ENCODE measurements at regions of chr4 and their contacts with region 1.

Region 1: GRCh38 chr4:30714408-30715027 is 5.7 kb upstream of the PCDH7 start:
- DNase-seq: peak in 1 of 2 experiments; percentile 35
- H3K4me3 ChIP-seq: no peak overlapping the region
- H3K27ac ChIP-seq: no peak overlapping the region
- H3K4me1 ChIP-seq: no peaks in the 10 kb centered on the region
- H3K27me3 ChIP-seq: no peaks in the 10 kb centered on the region
- CTCF ChIP-seq: peak; percentile 79

Region 2: DNA sequence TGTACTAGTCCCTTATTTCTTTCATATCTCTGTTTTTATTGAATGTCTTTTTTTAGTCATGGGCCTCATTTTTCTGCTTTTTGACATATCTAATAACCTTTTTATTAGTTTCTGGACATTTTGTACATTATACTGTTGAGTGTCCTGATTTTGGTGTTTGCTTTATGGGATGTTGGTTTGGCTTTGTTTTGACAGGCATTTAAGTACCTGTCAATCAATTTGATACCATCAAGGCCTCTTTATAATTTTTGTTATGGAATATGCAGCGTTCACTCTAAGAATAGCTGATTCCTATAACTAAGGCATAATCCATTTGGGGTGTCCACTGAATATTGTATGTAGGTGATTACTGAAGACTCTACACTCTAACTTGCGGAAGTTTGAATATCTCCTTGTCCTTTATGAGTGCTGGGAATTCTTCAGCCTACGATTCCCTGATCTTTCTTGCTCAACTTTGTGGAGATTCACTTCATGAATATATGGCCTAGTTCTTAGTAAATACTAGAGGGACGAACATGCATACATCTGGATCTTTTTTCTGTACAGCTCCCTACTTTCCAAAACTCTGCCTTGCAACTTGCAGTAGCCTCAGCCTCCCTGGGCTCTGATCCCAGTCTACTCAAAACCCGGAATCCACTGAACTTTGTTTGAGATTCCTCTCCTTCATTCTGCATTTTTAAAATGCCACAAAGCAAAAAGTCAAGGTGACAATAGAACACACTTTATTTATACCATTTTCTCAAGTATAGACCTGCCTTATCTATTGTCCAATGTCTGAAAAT is 44.5 kb before region 1 on chr4:
- CTCF ChIA-PET with region 1: no interaction called
- POLR2A ChIA-PET with region 1: no interaction called
- intact Hi-C with region 1: no loop called
- DNase-seq: no peak
- H3K4me3 ChIP-seq: no peak overlapping the region
- H3K27ac ChIP-seq: no peak overlapping the region
- H3K4me1 ChIP-seq: no peaks in the 10 kb centered on the region
- H3K27me3 ChIP-seq: no peaks in the 10 kb centered on the region
- CTCF ChIP-seq: no peak

Region 3: DNA sequence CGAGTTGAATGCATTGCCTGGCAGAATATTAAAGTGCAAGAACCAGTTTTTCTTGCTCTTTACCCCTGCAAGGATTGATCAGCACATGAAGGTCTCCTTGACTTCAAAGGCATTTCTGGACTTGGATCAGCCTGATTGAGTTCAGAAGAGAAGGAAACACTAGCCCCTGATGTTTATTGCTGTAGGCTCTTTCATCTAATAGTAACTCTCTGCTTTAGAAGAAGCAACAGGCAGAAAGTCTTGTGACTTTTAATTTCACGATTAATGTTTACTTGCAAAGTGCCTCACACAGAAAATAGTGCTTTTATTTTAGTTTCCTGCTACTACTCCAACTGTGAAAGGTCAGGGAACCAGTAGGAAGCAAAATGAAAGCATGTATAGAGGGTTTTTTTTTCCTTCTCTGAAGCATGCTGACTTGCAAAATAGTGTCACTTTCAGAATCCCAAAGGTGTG is 74.7 kb after region 1 on chr4:
- CTCF ChIA-PET with region 1: no interaction called
- POLR2A ChIA-PET with region 1: no interaction called
- intact Hi-C with region 1: no loop called
- DNase-seq: peak; percentile 15 to 85
- H3K4me3 ChIP-seq: peak overlapping the region; percentile 25; the same call in 1 of the 2 replicates
- H3K27ac ChIP-seq: peak overlapping the region; percentile 61
- H3K4me1 ChIP-seq: peaks cover 22% of the 10 kb centered on the region
- H3K27me3 ChIP-seq: no peaks in the 10 kb centered on the region
- CTCF ChIP-seq: no peak

Region 4: DNA sequence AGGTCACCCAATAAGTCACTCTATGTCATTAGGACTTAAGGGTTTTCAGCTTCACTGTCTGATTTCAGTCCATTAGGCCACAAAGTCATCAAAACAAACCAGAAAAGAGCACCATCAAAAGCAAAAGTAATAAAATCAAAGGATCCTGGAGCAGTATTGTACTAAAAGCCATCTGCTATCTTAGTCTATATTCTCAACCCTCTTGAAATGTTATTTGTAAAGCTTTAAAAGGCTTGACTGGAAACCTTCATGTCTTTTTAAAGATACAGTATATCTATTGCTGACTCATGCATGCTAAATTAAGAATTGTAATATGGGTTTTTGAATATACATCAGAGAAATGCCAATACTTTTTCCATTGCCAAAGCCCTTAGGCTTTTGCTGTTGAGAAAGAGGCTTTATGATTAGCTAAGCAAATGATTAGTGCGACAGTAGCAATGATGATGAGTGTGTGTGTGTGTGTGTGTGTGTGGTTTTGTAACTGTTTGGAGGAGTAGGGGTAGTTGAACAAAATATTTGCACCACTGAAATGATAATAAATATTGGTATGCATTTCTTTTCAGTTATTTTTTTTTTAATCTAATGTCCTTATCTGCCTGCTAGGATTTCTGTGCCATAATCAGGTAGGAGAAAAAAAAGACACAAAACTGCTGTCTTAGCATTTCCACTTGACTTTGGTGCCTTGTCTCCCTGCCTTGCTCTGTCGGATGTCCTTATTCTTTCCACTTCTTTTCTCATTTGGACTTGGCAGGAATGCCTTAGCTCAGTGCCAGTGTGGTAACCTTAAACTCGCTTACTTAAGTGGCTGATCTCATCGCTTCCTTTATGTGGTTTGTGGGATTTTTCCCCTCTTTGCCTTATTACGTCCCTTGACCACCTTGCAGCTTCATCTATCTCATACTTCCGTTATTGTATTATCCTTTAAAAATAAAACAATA is 125.3 kb after region 1 on chr4:
- CTCF ChIA-PET with region 1: interaction called, 12 read pairs
- POLR2A ChIA-PET with region 1: no interaction called
- intact Hi-C with region 1: loop called (anchors 2 kb)
- DNase-seq: peak in 1 of 2 experiments; percentile 59
- H3K4me3 ChIP-seq: no peak overlapping the region
- H3K27ac ChIP-seq: no peak overlapping the region
- H3K4me1 ChIP-seq: peaks cover 27% of the 10 kb centered on the region
- H3K27me3 ChIP-seq: no peaks in the 10 kb centered on the region
- CTCF ChIP-seq: no peak

Region 5: GRCh38 chr4:30875658-30876269 is 161.2 kb after region 1 on chr4:
- CTCF ChIA-PET with region 1: no interaction called
- POLR2A ChIA-PET with region 1: no interaction called
- intact Hi-C with region 1: no loop called
- DNase-seq: peak in 1 of 2 experiments; percentile 42
- H3K4me3 ChIP-seq: no peak overlapping the region
- H3K27ac ChIP-seq: no peak overlapping the region
- H3K4me1 ChIP-seq: peaks cover 5% of the 10 kb centered on the region; the same call in 1 of the 2 replicates
- H3K27me3 ChIP-seq: no peaks in the 10 kb centered on the region
- CTCF ChIP-seq: no peak

Region 6: GRCh38 chr4:30950737-30951136 is 236.2 kb after region 1 on chr4:
- CTCF ChIA-PET with region 1: no interaction called
- POLR2A ChIA-PET with region 1: no interaction called
- intact Hi-C with region 1: loop called (anchors 5 kb)
- DNase-seq: peak; percentile 54 to 98
- H3K4me3 ChIP-seq: no peak overlapping the region
- H3K27ac ChIP-seq: peak overlapping the region; percentile 48; the same call in 1 of the 2 replicates
- H3K4me1 ChIP-seq: peaks cover 58% of the 10 kb centered on the region
- H3K27me3 ChIP-seq: no peaks in the 10 kb centered on the region
- CTCF ChIP-seq: no peak

Region 7: DNA sequence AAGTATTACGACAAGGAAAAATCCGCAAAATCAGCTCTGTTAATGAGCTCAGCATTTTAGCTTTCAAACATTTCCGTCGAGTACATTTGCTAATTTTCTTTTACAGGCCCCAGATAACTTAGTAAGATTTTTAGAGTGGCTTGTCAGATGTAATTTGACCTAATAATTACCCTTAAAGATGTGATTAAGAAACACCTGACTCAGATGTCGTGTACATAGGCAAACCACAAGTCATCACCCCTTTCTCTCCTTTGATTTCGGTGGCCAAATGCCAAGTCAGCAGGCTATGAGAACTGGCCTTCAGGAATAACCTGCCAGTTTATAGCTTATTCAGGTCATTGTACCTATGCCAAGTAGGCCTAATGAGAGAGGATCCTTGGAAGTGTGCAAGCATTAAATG is 375.3 kb after region 1 on chr4:
- CTCF ChIA-PET with region 1: interaction called, 7 read pairs
- POLR2A ChIA-PET with region 1: interaction called, 8 read pairs
- intact Hi-C with region 1: loop called (anchors 1 kb)
- DNase-seq: peak; percentile 77 to 97
- H3K4me3 ChIP-seq: peak overlapping the region; percentile 13; the same call in 1 of the 2 replicates
- H3K27ac ChIP-seq: peak overlapping the region; percentile 98
- H3K4me1 ChIP-seq: peaks cover 29% of the 10 kb centered on the region
- H3K27me3 ChIP-seq: no peaks in the 10 kb centered on the region
- CTCF ChIP-seq: no peak

Region 8: GRCh38 chr4:31458813-31459212 is 744.3 kb after region 1 on chr4:
- CTCF ChIA-PET with region 1: no interaction called
- POLR2A ChIA-PET with region 1: no interaction called
- intact Hi-C with region 1: loop called (anchors 10 kb)
- DNase-seq: no peak
- H3K4me3 ChIP-seq: no peak overlapping the region
- H3K27ac ChIP-seq: no peak overlapping the region
- H3K4me1 ChIP-seq: no peaks in the 10 kb centered on the region
- H3K27me3 ChIP-seq: no peaks in the 10 kb centered on the region
- CTCF ChIP-seq: no peak

Region 9: GRCh38 chr4:32140636-32141035 is 1426.1 kb after region 1 on chr4:
- CTCF ChIA-PET with region 1: no interaction called
- POLR2A ChIA-PET with region 1: no interaction called
- intact Hi-C with region 1: loop called (anchors 5 kb)
- DNase-seq: peak; percentile 54 to 63
- H3K4me3 ChIP-seq: no peak overlapping the region
- H3K27ac ChIP-seq: peak overlapping the region; percentile 55
- H3K4me1 ChIP-seq: peaks cover 4% of the 10 kb centered on the region; the same call in 1 of the 2 replicates
- H3K27me3 ChIP-seq: no peaks in the 10 kb centered on the region
- CTCF ChIP-seq: no peak